ENCODE measurements at regions of chr1 and their contacts with region 1.

Region 1: DNA sequence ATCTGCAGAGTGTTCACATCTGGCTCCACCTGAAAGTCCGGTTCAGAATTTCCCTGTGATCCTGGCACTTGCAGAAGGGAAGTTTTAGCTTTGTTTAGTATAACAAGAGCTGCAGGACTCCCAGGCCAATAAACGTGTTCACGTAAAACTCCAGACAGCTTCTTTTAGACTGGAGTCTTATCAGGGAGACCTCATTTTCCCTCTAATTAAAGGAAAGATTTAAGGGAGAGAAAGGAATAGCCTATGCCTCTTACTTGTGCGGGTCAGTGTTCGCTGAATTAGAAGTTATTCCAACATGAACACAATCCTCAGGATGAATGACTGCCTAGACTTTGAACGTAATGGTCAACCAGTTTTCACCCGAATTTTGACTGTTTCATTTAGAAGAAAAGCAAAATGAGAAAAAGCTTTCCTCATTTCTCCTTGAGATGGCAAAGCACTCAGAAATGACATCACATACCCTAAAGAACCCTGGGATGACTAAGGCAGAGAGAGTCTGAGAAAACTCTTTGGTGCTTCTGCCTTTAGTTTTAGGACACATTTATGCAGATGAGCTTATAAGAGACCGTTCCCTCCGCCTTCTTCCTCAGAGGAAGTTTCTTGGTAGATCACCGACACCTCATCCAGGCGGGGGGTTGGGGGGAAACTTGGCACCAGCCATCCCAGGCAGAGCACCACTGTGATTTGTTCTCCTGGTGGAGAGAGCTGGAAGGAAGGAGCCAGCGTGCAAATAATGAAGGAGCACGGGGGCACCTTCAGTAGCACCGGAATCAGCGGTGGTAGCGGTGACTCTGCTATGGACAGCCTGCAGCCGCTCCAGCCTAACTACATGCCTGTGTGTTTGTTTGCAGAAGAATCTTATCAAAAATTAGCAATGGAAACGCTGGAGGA is 202.1 kb upstream of the SGIP1 start:
- DNase-seq: no peak
- ATAC-seq: peak; percentile 9
- H3K4me3 Mint-ChIP-seq: peak overlapping the region; percentile 98
- H3K27ac Mint-ChIP-seq: peak overlapping the region; percentile 98
- H3K4me1 Mint-ChIP-seq: peaks cover 70% of the 10 kb centered on the region
- H3K27me3 Mint-ChIP-seq: no peaks in the 10 kb centered on the region
- CTCF ChIP-seq: no peak

Region 2: GRCh38 chr1:66271216-66271903 is 60.5 kb before region 1 on chr1:
- CTCF ChIA-PET with region 1: no interaction called
- POLR2A ChIA-PET with region 1: interaction called, 31 read pairs
- intact Hi-C with region 1: loop called (anchors 1 kb)
- DNase-seq: no peak
- ATAC-seq: peak; percentile 78
- H3K4me3 Mint-ChIP-seq: peak overlapping the region; percentile 57
- H3K27ac Mint-ChIP-seq: peak overlapping the region; percentile 81
- H3K4me1 Mint-ChIP-seq: peaks cover 51% of the 10 kb centered on the region
- H3K27me3 Mint-ChIP-seq: no peaks in the 10 kb centered on the region
- CTCF ChIP-seq: no peak

Region 3: DNA sequence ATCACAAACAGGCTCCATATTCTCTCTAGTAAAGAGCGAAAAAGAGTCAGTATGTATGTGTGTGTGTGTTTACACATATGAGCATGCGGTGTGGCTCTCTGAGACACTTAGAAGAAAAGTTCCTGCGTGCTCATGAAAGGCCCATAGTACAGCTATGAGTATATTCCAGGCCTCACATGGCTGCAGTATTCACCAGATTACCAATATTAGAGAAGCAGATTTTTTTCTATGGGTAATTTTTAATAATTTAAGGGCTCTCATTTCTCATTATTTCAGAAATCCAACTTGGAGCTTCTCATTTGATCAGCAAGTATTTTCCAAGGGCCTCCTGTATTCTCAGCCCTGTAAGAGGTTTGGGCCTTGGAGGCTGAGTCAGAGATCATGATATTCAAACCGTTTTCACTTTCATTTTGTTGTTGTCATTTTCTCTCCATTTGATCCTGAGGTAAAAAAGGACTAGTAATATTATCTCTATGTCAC is 30.9 kb before region 1 on chr1:
- CTCF ChIA-PET with region 1: no interaction called
- POLR2A ChIA-PET with region 1: interaction called, 11 read pairs
- intact Hi-C with region 1: loop called (anchors 2 kb)
- DNase-seq: no peak
- ATAC-seq: peak; percentile 82
- H3K4me3 Mint-ChIP-seq: peak overlapping the region; percentile 79
- H3K27ac Mint-ChIP-seq: peak overlapping the region; percentile 72
- H3K4me1 Mint-ChIP-seq: peaks cover 22% of the 10 kb centered on the region
- H3K27me3 Mint-ChIP-seq: no peaks in the 10 kb centered on the region
- CTCF ChIP-seq: no peak

Region 4: DNA sequence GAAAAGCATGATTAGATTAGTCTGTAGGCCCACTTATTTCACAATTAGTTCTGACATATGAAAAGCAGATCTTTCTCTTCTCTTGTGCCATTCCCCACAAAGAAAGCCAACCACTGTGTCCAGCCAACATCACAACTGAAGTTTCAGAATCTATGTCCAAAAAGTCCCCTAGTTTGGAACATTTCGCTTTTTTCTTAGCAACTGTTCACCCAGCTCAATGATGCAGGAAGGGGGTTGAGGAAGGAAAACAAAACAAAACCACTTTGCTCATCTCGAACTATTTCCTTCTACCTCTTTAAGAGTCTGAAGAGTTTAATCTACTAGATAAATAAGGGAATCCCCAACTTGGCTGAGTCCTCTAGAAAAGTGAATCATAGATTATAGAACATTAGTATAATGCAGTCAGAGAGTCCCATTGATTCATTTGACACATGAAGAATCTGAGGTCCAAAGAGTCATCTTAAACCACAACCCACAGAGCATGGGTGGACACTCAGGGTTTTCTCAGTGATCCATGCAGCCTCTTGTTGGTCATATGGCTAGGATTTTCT is 42.7 kb after region 1 on chr1:
- CTCF ChIA-PET with region 1: interaction called, 10 read pairs
- POLR2A ChIA-PET with region 1: interaction called, 279 read pairs
- intact Hi-C with region 1: loop called (anchors 1 kb)
- DNase-seq: no peak
- ATAC-seq: peak; percentile 79
- H3K4me3 Mint-ChIP-seq: peak overlapping the region; percentile 39
- H3K27ac Mint-ChIP-seq: peak overlapping the region; percentile 93
- H3K4me1 Mint-ChIP-seq: peaks cover 94% of the 10 kb centered on the region
- H3K27me3 Mint-ChIP-seq: no peaks in the 10 kb centered on the region
- CTCF ChIP-seq: no peak

Region 5: DNA sequence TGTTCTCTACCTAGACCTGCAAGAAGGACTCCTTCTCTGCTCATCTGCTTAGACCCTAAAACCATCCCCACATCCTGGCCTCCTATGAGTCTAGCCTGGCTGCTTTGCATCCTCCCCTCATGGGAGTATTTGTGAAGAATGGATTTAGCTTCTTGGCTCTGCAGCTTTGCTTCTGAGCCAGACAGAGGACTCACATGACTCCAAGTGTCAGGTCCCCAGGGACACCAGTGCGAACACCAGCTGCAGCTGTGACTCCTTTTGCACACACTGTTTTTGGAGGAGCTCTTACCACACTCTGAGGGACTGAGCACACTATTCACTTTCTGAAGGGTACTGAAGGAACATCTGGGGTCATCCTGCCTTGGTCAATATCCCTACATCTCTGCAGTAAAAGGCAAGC is 70.3 kb after region 1 on chr1:
- CTCF ChIA-PET with region 1: interaction called, 8 read pairs
- POLR2A ChIA-PET with region 1: interaction called, 74 read pairs
- intact Hi-C with region 1: loop called (anchors 1 kb)
- DNase-seq: peak; percentile 65
- ATAC-seq: peak; percentile 86
- H3K4me3 Mint-ChIP-seq: peak overlapping the region; percentile 72
- H3K27ac Mint-ChIP-seq: peak overlapping the region; percentile 90
- H3K4me1 Mint-ChIP-seq: peaks cover 67% of the 10 kb centered on the region
- H3K27me3 Mint-ChIP-seq: no peaks in the 10 kb centered on the region
- CTCF ChIP-seq: no peak

Region 6: DNA sequence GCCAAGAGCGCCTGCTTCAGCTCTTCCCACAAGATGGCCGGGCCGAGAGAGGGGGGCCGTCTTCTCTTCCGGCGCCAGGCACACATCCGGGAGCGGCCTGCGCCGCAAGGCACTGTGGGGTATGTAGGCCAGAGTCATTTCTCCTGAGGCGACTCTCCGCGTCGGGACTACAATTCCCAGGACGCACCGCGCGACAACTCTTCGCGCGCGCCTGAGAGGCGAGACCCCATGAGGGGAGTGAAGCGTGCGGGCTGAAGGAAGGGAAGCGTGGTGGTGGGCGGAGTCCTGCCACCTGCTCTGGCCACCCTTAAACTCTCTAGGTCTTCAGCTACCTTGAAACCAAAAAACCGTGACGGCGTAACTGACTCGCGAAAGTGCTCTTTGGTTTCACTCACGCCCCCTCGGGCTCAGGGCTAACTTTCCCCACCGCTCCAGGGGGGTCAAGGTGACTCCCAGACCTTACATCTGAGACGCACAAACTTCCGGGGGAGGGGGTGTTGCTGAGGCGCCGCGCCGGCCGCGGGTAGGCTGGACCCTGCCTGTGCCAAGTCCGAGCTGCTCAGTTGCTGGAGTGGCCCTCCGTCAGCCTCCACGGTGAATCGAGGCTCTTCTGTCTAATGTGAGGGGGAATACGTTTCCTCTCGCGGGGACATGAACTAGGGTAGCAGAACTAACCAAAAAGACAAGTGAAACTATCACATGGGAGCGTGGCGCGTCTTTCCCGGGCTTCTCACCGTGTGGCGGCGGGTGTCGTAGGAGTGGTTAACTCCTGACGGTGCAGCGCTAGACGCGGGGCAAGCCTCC is 1098.7 kb after region 1 on chr1 and contains the start of gene SERBP1:
- CTCF ChIA-PET with region 1: no interaction called
- POLR2A ChIA-PET with region 1: interaction called, 5 read pairs
- intact Hi-C with region 1: loop called (anchors 1 kb)
- DNase-seq: peak; percentile 91
- ATAC-seq: peak; percentile 86
- H3K4me3 Mint-ChIP-seq: peak within 1 kb of the TSS; percentile 98
- H3K27ac Mint-ChIP-seq: peak within 1 kb of the TSS; percentile 99
- H3K4me1 Mint-ChIP-seq: peaks cover 59% of the 10 kb centered on the region
- H3K27me3 Mint-ChIP-seq: no peaks in the 10 kb centered on the region
- CTCF ChIP-seq: no peak
- total RNA-seq, gene SERBP1: 222 and 232 TPM in 2 replicates

Measured in activated B cell treated with CpG ODN at 0.5 μM for 24 hours (primary cell).